Activated CD4-positive, alpha-beta T cell treated with anti-CD3 and anti-CD28 coated beads for 36 hours (primary cell): ENCODE measurements at regions of chr2 and their contacts with region 1.

Region 1: DNA sequence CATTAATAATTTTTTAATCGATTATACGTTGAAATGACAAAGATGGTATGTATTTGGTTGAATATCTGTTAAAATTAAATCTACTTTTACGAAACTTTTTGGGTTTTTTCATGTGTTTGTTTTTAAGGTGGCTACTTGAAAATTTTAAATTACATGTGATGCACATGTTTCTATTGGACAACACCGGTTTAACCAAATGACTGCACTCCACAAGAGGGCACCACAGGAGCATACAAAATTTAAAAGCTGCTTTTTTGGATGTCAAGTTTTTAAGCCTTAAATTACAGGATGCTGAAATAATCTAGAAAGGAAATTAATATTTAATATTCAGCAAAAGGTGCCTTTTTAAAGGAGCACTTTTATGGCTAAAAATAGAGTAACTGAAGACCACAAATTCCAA is 98.7 kb downstream of the ACVR1 start:
- DNase-seq: peak; percentile 68
- ATAC-seq: no peak
- H3K4me3 Mint-ChIP-seq: no peak overlapping the region
- H3K27ac Mint-ChIP-seq: no peak overlapping the region
- H3K4me1 Mint-ChIP-seq: peaks cover 12% of the 10 kb centered on the region
- H3K27me3 Mint-ChIP-seq: no peaks in the 10 kb centered on the region

Region 2: GRCh38 chr2:157825885-157826284 is 48.5 kb after region 1 on chr2:
- CTCF ChIA-PET with region 1: no interaction called
- POLR2A ChIA-PET with region 1: no interaction called
- intact Hi-C with region 1: loop called in 1 of 2 experiments (anchors 1 kb)
- DNase-seq: no peak
- ATAC-seq: no peak
- H3K4me3 Mint-ChIP-seq: no peak overlapping the region
- H3K27ac Mint-ChIP-seq: no peak overlapping the region
- H3K4me1 Mint-ChIP-seq: peaks cover 9% of the 10 kb centered on the region
- H3K27me3 Mint-ChIP-seq: no peaks in the 10 kb centered on the region

Region 3: DNA sequence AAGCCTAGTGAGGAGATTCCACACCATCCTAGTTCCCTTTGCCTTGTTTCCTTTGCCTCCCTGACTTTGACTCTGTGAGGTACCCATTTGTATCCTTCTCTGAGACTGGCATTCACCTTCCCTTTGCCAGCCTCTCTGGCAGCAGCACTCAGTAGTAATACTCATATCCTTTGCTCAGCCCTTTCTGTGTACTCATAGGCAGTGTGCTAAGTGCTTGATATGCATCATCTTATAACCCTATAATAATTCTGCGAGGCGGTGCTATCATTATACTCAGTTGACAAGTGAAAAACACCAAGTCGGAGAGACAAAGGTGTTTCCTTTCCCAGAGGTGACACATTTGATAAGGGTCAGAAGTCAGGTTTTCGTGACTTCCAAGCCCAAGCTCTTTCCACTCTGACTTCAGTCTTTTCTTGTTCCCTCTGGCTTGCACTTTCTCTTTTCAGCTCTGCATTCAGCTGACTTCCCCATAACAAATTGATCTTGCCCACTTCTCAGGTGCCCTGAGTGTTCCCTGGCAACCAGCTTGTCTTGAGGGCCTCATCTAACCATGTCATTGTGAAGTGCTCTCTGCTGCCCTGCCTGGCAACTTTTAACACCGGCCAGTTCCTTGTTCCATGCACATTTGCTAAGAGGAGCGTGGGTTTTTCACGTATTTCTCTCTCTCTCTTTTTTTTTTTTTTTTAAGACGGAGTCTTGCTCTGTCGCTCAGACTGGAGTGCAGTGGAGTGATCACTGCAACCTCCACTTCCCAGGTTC is 229.7 kb after region 1 on chr2:
- CTCF ChIA-PET with region 1: interaction called, 15 read pairs
- POLR2A ChIA-PET with region 1: no interaction called
- intact Hi-C with region 1: loop called (anchors 1 kb)
- DNase-seq: peak; percentile 44
- ATAC-seq: peak; percentile 82
- H3K4me3 Mint-ChIP-seq: no peak overlapping the region
- H3K27ac Mint-ChIP-seq: no peak overlapping the region
- H3K4me1 Mint-ChIP-seq: peaks cover 18% of the 10 kb centered on the region
- H3K27me3 Mint-ChIP-seq: peaks cover 6% of the 10 kb centered on the region

Region 4: DNA sequence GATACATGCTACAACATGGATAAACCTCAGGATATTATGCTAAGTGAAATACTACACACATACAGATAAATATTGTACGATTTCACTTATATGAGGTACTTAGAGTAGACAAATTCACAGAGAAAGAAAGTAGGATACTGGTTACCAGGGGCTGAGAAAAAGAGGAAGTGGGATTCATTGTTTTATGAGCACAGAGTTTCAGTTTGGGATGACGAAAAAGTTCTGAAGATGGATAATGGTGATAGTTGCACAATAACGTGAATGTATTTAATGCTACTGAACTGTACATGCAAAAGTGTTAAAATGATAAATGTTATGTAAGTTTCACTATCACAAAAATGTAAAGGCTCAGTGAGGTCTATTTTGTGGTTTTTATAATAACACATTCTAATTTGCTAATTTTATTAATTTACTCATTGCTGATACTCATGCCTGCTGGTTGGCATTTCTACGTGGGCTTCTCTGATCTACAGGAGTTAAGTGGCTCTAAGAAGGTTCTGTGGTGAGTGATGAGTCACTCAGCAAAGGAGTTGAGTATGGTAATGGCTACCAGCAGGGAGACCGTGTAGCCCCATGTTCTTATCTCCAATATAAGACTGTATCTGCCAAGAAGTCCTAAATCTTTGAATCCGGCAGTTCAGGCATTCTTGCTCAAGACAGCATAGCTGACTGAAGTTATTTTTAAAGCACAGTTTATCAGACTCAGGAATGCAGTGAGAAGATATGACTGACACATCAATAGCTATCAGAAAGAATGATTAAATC is 365.3 kb after region 1 on chr2:
- CTCF ChIA-PET with region 1: no interaction called
- POLR2A ChIA-PET with region 1: no interaction called
- intact Hi-C with region 1: no loop called
- DNase-seq: no peak
- ATAC-seq: no peak
- H3K4me3 Mint-ChIP-seq: no peak overlapping the region
- H3K27ac Mint-ChIP-seq: no peak overlapping the region
- H3K4me1 Mint-ChIP-seq: no peaks in the 10 kb centered on the region
- H3K27me3 Mint-ChIP-seq: peaks cover 28% of the 10 kb centered on the region